Ovary (tissue), 10 donors: ENCODE measurements at regions of chr10 and their contacts with region 1.

Region 1: GRCh38 chr10:122298598-122299301 is 27.7 kb downstream of the BTBD16 start:
- DNase-seq: peak; percentile 69 to 87 (median 84)
- H3K4me3 ChIP-seq: peak overlapping the region; percentile 21
- H3K27ac ChIP-seq: no peak overlapping the region
- H3K4me1 ChIP-seq: no peaks in the 10 kb centered on the region
- H3K27me3 ChIP-seq: no peaks in the 10 kb centered on the region
- CTCF ChIP-seq: peak; percentile 69 to 86 (median 85)
- EP300 ChIP-seq: no peak
- POLR2A ChIP-seq: no peak

Region 2: GRCh38 chr10:122342293-122343134 is 43.8 kb after region 1 on chr10:
- intact Hi-C with region 1: loop called in 2 of 4 experiments (anchors 5 kb)
- DNase-seq: peak; percentile 39 to 72 (median 53)
- H3K4me3 ChIP-seq: no peak overlapping the region
- H3K27ac ChIP-seq: peak overlapping the region in 1 of 2 donors; percentile 38
- H3K4me1 ChIP-seq: peaks cover 4% of the 10 kb centered on the region
- H3K27me3 ChIP-seq: no peaks in the 10 kb centered on the region
- CTCF ChIP-seq: peak; percentile 43 to 72 (median 62)
- EP300 ChIP-seq: no peak
- POLR2A ChIP-seq: no peak

Region 3: GRCh38 chr10:122551450-122551849 is 252.7 kb after region 1 on chr10:
- intact Hi-C with region 1: loop called in 1 of 4 experiments (anchors 10 kb)
- DNase-seq: no peak
- H3K4me3 ChIP-seq: no peak overlapping the region
- H3K27ac ChIP-seq: no peak overlapping the region
- H3K4me1 ChIP-seq: no peaks in the 10 kb centered on the region
- H3K27me3 ChIP-seq: no peaks in the 10 kb centered on the region
- CTCF ChIP-seq: no peak
- EP300 ChIP-seq: no peak
- POLR2A ChIP-seq: no peak